ENCODE measurements at regions of chr7 and their contacts with region 1.

Region 1: GRCh38 chr7:94657771-94658693 is 2.1 kb upstream of the SGCE start:
- DNase-seq: peak; percentile 95
- H3K4me3 ChIP-seq: peak overlapping the region in 2 of 3 experiments; percentile 38 to 41
- H3K27ac ChIP-seq: peak overlapping the region; percentile 47
- H3K4me1 ChIP-seq: peaks cover 20% of the 10 kb centered on the region
- H3K27me3 ChIP-seq: no peaks in the 10 kb centered on the region
- CTCF ChIP-seq: no peak
- POLR2A ChIP-seq: no peak

Region 2: GRCh38 chr7:94440451-94441039 is 217.5 kb before region 1 on chr7:
- CTCF ChIA-PET with region 1: no interaction called
- POLR2A ChIA-PET with region 1: no interaction called
- dilution Hi-C with region 1: no loop called
- intact Hi-C with region 1: no loop called
- DNase-seq: no peak
- H3K4me3 ChIP-seq: no peak overlapping the region
- H3K27ac ChIP-seq: no peak overlapping the region
- H3K4me1 ChIP-seq: no peaks in the 10 kb centered on the region
- H3K27me3 ChIP-seq: peaks cover 0 to 8% of the 10 kb centered on the region in 2 experiments
- CTCF ChIP-seq: no peak
- POLR2A ChIP-seq: no peak

Region 3: GRCh38 chr7:94620703-94621118 is 37.3 kb before region 1 on chr7:
- CTCF ChIA-PET with region 1: interaction called, 17 read pairs
- POLR2A ChIA-PET with region 1: no interaction called
- dilution Hi-C with region 1: no loop called
- intact Hi-C with region 1: loop called (anchors 1 kb)
- DNase-seq: peak; percentile 83
- H3K4me3 ChIP-seq: no peak overlapping the region
- H3K27ac ChIP-seq: peak overlapping the region; percentile 9
- H3K4me1 ChIP-seq: peaks cover 5% of the 10 kb centered on the region
- H3K27me3 ChIP-seq: no peaks in the 10 kb centered on the region
- CTCF ChIP-seq: no peak
- POLR2A ChIP-seq: no peak

Region 4: GRCh38 chr7:94697035-94697974 is 39.3 kb after region 1 on chr7:
- CTCF ChIA-PET with region 1: interaction called, 9 read pairs
- POLR2A ChIA-PET with region 1: no interaction called
- dilution Hi-C with region 1: no loop called
- intact Hi-C with region 1: loop called (anchors 1 kb)
- DNase-seq: peak; percentile 90
- H3K4me3 ChIP-seq: no peak overlapping the region
- H3K27ac ChIP-seq: peak overlapping the region; percentile 83
- H3K4me1 ChIP-seq: peaks cover 43% of the 10 kb centered on the region
- H3K27me3 ChIP-seq: no peaks in the 10 kb centered on the region
- CTCF ChIP-seq: no peak
- POLR2A ChIP-seq: no peak

Region 5: GRCh38 chr7:94907026-94907810 is 249.2 kb after region 1 on chr7 and contains the start of gene PPP1R9A:
- CTCF ChIA-PET with region 1: interaction called, 3 read pairs
- POLR2A ChIA-PET with region 1: no interaction called
- dilution Hi-C with region 1: no loop called
- intact Hi-C with region 1: loop called (anchors 5 kb)
- DNase-seq: peak; percentile 23
- H3K4me3 ChIP-seq: peak within 1 kb of the TSS; percentile 35 to 63 (median 45)
- H3K27ac ChIP-seq: no peak within 1 kb of the TSS
- H3K4me1 ChIP-seq: peaks cover 3% of the 10 kb centered on the region
- H3K27me3 ChIP-seq: peaks cover 11 to 18% of the 10 kb centered on the region in 2 experiments
- CTCF ChIP-seq: peak in 1 of 2 donors; percentile 57
- POLR2A ChIP-seq: no peak
- total RNA-seq, gene PPP1R9A: 3.0 and 3.2 TPM in 2 replicates

Region 6: DNA sequence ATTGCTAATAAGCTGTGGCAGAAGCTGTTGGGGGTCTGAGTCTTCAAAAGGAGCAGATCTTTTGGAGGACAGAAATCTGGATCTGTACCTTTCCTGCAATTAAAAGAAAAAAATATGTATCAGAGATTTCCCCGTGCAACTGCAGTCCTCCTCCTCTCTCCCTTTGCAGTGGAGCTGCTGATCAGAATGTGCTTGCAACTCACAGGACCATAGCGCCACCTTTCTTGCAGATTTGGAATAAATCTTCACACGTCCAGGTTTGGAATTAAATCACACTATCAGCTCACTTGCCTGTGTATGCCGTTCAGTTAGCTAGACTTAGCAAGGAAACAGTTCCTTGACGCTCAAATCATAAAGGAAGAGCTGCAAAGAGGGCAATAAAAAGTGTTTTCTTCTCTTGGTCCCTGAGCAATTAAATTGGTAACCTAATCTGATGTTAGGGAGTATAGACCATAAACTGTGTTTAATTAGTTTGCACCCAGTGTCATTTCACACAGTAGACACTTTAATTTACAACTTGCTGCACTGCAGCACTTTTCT is 588.9 kb after region 1 on chr7:
- CTCF ChIA-PET with region 1: interaction called, 7 read pairs
- POLR2A ChIA-PET with region 1: no interaction called
- dilution Hi-C with region 1: no loop called
- intact Hi-C with region 1: loop called (anchors 5 kb)
- DNase-seq: peak; percentile 71
- H3K4me3 ChIP-seq: no peak overlapping the region
- H3K27ac ChIP-seq: no peak overlapping the region
- H3K4me1 ChIP-seq: no peaks in the 10 kb centered on the region
- H3K27me3 ChIP-seq: no peaks in the 10 kb centered on the region
- CTCF ChIP-seq: peak; percentile 63 to 68
- POLR2A ChIP-seq: no peak

Region 7: DNA sequence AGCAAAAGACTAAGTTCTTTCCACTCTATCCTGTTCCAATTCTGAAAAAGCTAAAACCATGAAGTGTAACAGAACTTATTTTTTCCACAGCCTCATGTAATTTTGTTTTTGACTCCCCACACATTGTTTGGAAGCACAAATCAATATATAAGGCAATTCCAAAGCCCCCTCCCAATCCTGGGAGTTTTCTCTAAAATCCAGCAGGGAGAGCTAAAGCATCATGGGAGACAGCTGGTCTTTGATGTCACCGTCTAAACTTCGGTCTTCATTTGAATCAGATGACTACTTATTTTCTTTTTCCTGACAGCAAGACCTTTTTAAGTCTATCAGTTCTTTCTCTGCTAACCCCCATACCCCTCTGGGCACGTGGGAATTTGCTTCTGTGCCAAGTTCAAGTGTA is 699.6 kb after region 1 on chr7:
- CTCF ChIA-PET with region 1: no interaction called
- POLR2A ChIA-PET with region 1: no interaction called
- dilution Hi-C with region 1: no loop called
- intact Hi-C with region 1: no loop called
- DNase-seq: no peak
- H3K4me3 ChIP-seq: no peak overlapping the region
- H3K27ac ChIP-seq: no peak overlapping the region
- H3K4me1 ChIP-seq: no peaks in the 10 kb centered on the region
- H3K27me3 ChIP-seq: no peaks in the 10 kb centered on the region
- CTCF ChIP-seq: no peak
- POLR2A ChIP-seq: no peak